HAP-1 (cell line): ENCODE measurements at regions of chr22 and their contacts with region 1.

Region 1: DNA sequence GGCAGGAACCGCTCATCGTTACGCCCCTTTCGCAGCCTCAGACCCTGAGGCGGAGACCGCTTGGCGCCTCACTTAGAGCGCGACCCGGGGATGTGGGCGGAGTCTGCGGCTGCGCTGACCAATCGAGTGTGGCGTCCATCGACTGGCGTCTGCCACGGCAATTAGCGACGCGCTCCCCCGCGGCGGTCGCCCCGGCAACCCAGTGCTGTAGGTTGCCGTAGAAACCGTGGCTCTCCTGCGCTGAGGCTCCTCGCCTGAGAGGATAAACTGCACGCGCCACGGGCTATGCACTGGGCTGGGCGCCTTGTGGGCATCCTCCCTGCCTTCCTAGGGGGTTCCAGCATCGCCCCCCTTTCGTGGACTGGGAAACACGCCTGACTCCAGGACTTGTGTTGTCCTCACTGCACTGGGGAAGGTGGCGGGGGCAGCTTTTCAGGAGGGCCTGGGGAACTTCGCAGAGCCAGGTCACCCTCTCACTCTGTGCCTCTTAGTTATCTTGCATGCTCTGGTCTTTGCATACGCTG is 701 bp upstream of the P2RX6 start:
- DNase-seq: peak; percentile 92 to 98
- H3K4me3 ChIP-seq: peak overlapping the region; percentile 34
- H3K4me1 ChIP-seq: peaks cover 11% of the 10 kb centered on the region
- H3K27me3 ChIP-seq: no peaks in the 10 kb centered on the region

Region 2: GRCh38 chr22:20858615-20859416 is 155.4 kb before region 1 on chr22 and contains the starts of genes PI4KA and SNAP29:
- in situ Hi-C with region 1: loop called (anchors 10 kb)
- DNase-seq: peak; percentile 96 to 99
- H3K4me3 ChIP-seq: peak within 1 kb of the TSS; percentile 82
- H3K4me1 ChIP-seq: peaks cover 6% of the 10 kb centered on the region; the same call in 1 of the 2 replicates
- H3K27me3 ChIP-seq: no peaks in the 10 kb centered on the region

Region 3: DNA sequence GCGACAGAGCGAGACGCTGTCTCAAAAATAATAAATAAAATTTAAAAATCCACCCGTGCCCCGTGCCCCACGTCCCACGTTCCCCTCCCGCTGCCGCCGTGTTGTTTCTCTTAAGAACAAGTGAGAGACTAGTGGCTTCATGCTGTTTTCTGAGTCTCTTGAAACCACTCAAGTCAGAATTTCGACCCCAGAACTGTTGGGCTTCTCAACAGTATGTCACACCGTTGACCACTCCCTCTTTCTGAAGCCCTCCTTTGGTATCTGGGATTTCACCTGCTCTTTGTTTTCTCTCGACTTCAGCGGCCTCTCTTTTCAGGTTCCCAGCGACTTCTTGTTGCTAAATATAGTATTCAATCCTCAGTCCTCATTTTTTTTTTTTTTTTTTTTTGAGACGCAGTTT is 652.5 kb after region 1 on chr22:
- in situ Hi-C with region 1: loop called (anchors 10 kb)
- DNase-seq: no peak
- H3K4me3 ChIP-seq: peak overlapping the region; percentile 75
- H3K4me1 ChIP-seq: no peaks in the 10 kb centered on the region
- H3K27me3 ChIP-seq: no peaks in the 10 kb centered on the region